Heart right ventricle (tissue), 16 donors: ENCODE measurements at regions of chr1 and their contacts with region 1.

Region 1: DNA sequence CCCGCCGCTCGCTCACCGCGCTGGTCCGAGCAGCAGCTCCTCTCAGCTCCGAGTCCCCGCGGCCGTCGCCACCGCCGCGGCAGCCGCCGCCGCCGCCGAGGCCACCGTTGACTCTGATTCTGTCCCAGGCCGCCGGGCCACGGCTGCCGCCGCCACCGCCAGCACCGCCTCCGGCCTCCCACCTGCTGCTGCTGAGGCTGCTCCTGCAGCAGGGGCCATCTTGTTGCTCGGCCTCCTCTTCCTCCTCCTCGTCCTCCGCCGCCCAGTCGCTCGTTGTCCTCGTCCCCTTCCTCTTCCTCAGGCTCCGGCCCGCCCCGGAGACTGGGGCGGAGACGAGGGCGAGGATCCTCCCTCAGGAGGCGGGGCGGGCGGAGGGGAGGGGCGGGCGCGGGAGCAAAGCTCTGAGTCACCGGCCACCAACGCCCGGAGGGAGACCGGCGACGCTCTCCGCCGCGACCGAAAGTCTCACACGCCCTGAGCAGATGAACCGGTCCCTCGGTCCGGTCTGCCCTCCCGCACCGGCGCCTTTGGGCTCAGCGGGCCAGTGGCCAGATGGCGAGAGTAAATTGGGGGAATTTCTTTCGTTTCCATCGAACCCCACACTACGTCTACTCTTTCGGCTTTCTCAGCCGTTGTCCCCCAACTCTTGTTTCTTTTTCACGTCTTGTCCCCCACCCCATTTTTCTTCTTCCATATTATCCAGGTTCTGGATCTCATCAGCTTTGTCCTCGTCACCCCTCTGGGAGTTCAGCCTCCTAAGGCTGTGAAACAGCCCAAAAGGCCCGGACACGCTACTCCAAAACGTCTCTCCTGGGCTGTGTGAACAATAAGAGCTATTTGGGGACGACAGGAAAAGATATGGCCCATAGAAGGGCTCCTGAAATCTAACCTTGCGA is at the start of gene RC3H1:
- DNase-seq: peak; percentile 93 to 94
- ATAC-seq: peak; percentile 97 to 99 (median 98)
- H3K4me3 ChIP-seq: peak within 1 kb of the TSS; percentile 59 to 94 (median 86)
- H3K27ac ChIP-seq: peak within 1 kb of the TSS; percentile 82 to 99 (median 94)
- H3K4me1 ChIP-seq: peaks cover 8 to 55% (median 53%) of the 10 kb centered on the region in 9 donors
- H3K27me3 ChIP-seq: no peaks in the 10 kb centered on the region
- CTCF ChIP-seq: no peak
- total RNA-seq, gene RC3H1: 19.9 to 26.5 (median 24.0) TPM

Region 2: GRCh38 chr1:173476664-173477285 is 545.6 kb before region 1 on chr1:
- intact Hi-C with region 1: loop called in 1 of 10 experiments (anchors 10 kb)
- DNase-seq: peak; percentile 91 to 92
- ATAC-seq: peak; percentile 89 to 96 (median 91)
- H3K4me3 ChIP-seq: peak overlapping the region; percentile 56 to 95 (median 90)
- H3K27ac ChIP-seq: peak overlapping the region; percentile 64 to 99 (median 96)
- H3K4me1 ChIP-seq: peaks cover 4 to 76% (median 46%) of the 10 kb centered on the region in 9 donors
- H3K27me3 ChIP-seq: no peaks in the 10 kb centered on the region
- CTCF ChIP-seq: peak in 3 of 9 donors; percentile 9 to 36 (median 20)

Region 3: DNA sequence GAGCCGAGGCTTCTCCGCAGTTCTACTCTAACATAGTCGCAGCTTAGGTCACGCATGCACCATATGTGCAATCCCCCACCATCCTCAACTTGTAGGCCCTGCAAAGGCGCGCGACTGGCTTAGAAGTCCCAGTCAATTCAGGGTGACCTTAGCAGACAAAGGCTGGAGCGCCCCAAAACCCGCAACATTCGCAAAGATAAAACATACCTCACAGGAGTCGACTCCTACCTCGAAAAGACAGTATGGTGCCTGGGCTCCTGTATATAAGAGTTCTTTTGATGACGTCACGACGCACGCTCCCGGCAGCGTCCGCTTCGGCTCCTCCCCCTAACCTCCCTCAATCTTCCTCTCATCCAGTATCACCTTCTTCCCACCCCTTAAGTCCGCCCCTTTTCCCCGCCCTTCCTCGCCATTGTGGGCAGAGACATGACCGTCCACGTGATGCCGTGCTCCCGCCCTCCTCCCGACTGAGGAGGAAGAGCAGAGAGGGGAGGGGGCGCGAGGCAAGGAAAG is 154.5 kb before region 1 on chr1 and contains the start of gene GAS5:
- intact Hi-C with region 1: loop called in 3 of 10 experiments (anchors 2 to 5 kb)
- DNase-seq: peak; percentile 98 to 100
- ATAC-seq: peak; percentile 95 to 97 (median 96)
- H3K4me3 ChIP-seq: peak within 1 kb of the TSS; percentile 61 to 94 (median 87)
- H3K27ac ChIP-seq: peak within 1 kb of the TSS; percentile 94 to 99 (median 98)
- H3K4me1 ChIP-seq: peaks cover 4 to 67% (median 58%) of the 10 kb centered on the region in 9 donors
- H3K27me3 ChIP-seq: no peaks in the 10 kb centered on the region
- CTCF ChIP-seq: no peak
- total RNA-seq, gene GAS5: 33.1 to 74.1 (median 42.4) TPM

Region 4: DNA sequence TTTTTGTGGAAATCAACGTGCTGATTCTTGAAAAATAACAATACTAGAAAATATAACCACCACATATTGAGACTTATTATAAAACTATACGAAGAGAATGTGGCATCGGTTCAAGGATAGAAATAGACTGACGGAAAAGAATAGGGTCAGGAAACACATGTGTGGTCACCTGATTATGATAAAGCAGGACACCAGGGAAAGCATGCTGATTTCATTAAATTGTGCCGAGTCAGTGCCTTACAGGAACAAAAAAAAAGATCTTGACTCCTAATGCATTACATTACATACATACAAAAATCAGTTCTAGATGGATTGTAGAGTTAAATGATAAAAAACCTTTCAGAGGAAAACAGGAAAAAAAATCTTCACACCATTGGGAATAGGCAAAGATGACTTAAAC is 61.7 kb before region 1 on chr1:
- intact Hi-C with region 1: no loop called
- DNase-seq: no peak
- ATAC-seq: peak in 1 of 8 donors; percentile 37
- H3K4me3 ChIP-seq: no peak overlapping the region
- H3K27ac ChIP-seq: peak overlapping the region in 2 of 10 donors; percentile 16 to 27
- H3K4me1 ChIP-seq: peaks cover 0 to 13% (median 2%) of the 10 kb centered on the region in 9 donors
- H3K27me3 ChIP-seq: no peaks in the 10 kb centered on the region
- CTCF ChIP-seq: no peak

Region 5: GRCh38 chr1:174159252-174160108 is 137.2 kb after region 1 on chr1 and contains the start of gene RABGAP1L:
- intact Hi-C with region 1: loop called in 6 of 10 experiments (anchors 5 to 10 kb)
- DNase-seq: peak; percentile 95 to 96
- ATAC-seq: peak; percentile 97 to 99 (median 98)
- H3K4me3 ChIP-seq: peak within 1 kb of the TSS; percentile 77 to 100 (median 92)
- H3K27ac ChIP-seq: peak within 1 kb of the TSS; percentile 68 to 96 (median 94)
- H3K4me1 ChIP-seq: peaks cover 0 to 36% (median 17%) of the 10 kb centered on the region in 9 donors
- H3K27me3 ChIP-seq: no peaks in the 10 kb centered on the region
- CTCF ChIP-seq: no peak
- total RNA-seq, gene RABGAP1L: 57.0 to 167 (median 114) TPM

Region 6: DNA sequence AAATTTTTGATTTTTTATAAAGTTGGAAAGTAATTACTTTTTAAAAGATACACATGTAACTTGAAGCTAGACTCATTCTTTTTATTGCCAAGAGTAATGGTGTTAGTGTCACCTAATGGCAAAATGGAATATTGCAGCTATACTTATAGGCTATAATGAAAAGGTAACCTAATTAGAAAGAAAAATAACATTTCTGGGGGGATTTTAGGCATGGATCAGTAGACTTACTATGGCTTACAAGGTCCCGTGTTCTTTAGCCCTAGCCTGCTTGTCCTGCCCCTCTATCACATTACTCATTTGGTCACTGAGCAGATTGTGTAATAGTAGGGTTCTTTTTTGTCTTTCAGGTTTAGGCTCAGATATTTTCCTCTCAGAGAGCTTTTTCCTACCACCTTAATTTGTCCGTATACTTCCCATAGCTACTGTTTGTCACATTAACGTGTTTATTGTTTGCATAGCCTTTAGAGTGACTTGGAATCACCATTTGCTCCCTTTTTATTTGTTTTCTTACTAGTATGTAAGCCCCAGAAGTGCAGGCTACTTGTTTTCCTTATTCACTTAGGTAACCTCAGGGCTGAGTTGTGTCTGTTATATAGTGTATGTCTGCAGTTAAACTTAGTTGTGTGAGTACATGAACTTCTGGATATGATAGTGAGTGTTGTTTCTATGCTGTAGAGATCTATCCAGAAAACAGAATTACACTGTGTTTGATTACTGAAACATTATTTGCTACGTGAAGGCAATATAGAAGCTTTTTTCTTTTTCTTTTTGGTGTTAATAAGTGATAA is 195.7 kb after region 1 on chr1:
- intact Hi-C with region 1: loop called in 2 of 10 experiments (anchors 10 kb)
- DNase-seq: no peak
- ATAC-seq: peak in 7 of 8 donors; percentile 16 to 74 (median 52)
- H3K4me3 ChIP-seq: no peak overlapping the region
- H3K27ac ChIP-seq: peak overlapping the region in 1 of 10 donors; percentile 35
- H3K4me1 ChIP-seq: peaks cover 0 to 21% (median 8%) of the 10 kb centered on the region in 9 donors
- H3K27me3 ChIP-seq: no peaks in the 10 kb centered on the region
- CTCF ChIP-seq: peak; percentile 51 to 84 (median 75)

Region 7: GRCh38 chr1:174999216-174999925 is 977.0 kb after region 1 on chr1:
- intact Hi-C with region 1: loop called in 1 of 10 experiments (anchors 5 kb)
- DNase-seq: peak; percentile 98
- ATAC-seq: peak; percentile 89 to 97 (median 95)
- H3K4me3 ChIP-seq: peak overlapping the region; percentile 69 to 90 (median 80)
- H3K27ac ChIP-seq: peak overlapping the region; percentile 83 to 100 (median 96)
- H3K4me1 ChIP-seq: peaks cover 0 to 63% (median 18%) of the 10 kb centered on the region in 9 donors
- H3K27me3 ChIP-seq: no peaks in the 10 kb centered on the region
- CTCF ChIP-seq: no peak